Dorsolateral prefrontal cortex (tissue), 120 donors: ENCODE measurements at regions of chr4 and their contacts with region 1.

Region 1: DNA sequence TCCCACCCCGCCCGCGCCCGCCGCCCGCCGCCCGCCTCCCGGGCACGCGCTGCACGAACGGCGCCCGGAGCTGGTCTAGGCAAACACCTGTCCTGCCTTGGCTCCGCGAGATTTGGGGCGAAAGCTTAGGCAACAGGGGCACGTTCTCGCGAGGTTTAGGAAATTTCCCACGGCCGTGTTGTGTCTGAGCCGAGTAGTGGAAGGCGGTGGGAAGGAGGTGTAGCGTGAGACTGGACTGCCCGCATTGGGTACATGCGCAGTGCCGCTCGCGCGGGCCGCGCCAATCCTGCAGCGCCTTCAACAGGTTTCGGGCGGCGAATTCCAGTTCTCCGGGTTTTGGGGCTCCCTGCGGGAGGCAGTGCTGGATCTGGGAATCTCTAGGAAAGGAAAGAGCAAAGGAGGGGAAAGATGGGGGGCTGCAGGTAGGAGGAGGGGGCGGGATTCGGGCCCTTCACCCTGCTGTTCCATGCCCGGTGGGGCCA is 1.3 kb upstream of the RBPJ start:
- DNase-seq: peak; percentile 90 to 99 (median 96)
- H3K4me3 ChIP-seq: peak overlapping the region; percentile 64 to 92 (median 82)
- H3K27ac ChIP-seq: peak overlapping the region; percentile 81 to 99 (median 96)
- H3K27me3 ChIP-seq: no peaks in the 10 kb centered on the region
- CTCF ChIP-seq: peak in 42 of 56 donors; percentile 10 to 61 (median 40)

Region 2: DNA sequence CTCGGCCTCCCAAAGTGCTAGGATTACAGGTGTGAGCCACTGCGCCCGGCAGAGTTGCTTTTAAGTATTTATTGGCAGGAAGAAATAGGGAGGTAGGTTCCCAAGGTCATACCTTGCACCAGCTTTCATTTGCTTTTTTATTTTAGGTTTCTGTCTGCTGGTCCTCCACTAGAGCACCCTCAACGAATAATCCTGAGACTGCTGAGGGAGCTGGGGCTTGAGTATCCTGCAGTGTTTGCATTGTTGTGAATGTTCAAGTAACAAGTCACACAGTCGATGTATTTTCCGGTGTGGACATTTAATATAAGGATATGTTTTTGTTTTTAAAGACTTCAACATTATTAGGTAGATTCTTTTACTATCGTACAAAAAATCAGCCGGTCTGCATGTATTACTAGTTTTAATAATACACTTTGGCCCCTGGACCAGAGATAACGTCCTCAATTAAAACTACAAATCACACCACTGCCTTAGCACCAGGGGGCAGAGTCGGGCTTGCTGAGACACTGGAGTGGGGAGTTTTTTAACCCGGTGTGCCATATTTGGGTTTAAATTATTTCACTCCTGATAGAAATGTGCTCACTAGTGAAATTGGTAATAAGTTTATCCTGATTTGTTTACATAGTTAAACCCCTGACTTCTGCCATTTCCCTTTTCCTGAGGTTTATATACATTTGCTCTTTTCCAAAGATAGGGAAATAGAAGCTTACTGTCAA is 393.9 kb before region 1 on chr4:
- intact Hi-C with region 1: loop called (anchors 5 to 10 kb)
- DNase-seq: peak in 8 of 10 donors; percentile 40 to 70 (median 56)
- H3K4me3 ChIP-seq: peak overlapping the region in 7 of 59 donors; percentile 1 to 26 (median 16)
- H3K27ac ChIP-seq: peak overlapping the region in 28 of 59 donors; percentile 12 to 86 (median 46)
- H3K27me3 ChIP-seq: no peaks in the 10 kb centered on the region
- CTCF ChIP-seq: peak; percentile 15 to 78 (median 67)

Region 3: GRCh38 chr4:25993395-25994185 is 325.9 kb before region 1 on chr4:
- intact Hi-C with region 1: loop called in 1 of 2 experiments (anchors 2 kb)
- DNase-seq: no peak
- H3K4me3 ChIP-seq: no peak overlapping the region
- H3K27ac ChIP-seq: no peak overlapping the region
- H3K27me3 ChIP-seq: no peaks in the 10 kb centered on the region
- CTCF ChIP-seq: peak in 5 of 56 donors; percentile 7 to 30 (median 25)

Region 4: DNA sequence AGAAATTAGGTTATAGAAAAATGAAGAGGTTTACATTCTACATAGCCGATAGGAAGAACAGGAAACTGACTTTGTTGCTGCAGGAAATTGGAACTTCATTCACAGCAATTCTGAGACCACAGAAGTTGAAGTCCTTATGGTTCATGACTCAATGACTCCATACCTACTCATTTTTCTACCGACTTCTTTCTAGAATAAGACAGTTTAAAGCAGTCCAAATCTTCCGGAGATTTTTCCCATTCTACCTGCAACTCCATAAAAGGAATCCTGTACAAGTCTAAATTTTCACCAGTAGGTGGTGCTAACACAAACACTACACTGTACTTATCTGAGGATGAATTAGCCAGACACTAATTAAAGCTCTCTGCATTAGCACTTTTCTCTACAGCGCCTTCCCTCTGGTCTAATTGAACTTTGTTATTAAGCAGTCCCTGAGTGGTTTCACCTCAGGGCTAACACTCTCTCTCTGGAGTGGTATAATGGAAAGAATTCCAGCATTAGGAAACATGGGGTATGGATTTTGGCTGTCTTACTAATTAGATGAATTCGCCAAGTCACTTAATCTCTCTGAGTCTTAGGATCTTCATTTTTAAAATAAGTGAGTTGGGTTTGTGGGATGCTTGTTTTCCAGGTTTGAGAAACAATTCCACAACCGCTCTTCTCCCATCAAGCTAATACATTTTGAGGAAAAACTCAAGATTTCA is 237.6 kb before region 1 on chr4:
- intact Hi-C with region 1: loop called (anchors 2 to 5 kb)
- DNase-seq: no peak
- H3K4me3 ChIP-seq: no peak overlapping the region
- H3K27ac ChIP-seq: no peak overlapping the region
- H3K27me3 ChIP-seq: peaks cover 0 to 11% (median 0%) of the 10 kb centered on the region in 45 donors
- CTCF ChIP-seq: peak; percentile 49 to 89 (median 76)

Region 5: GRCh38 chr4:26235500-26235899 is 84.0 kb before region 1 on chr4:
- intact Hi-C with region 1: loop called (anchors 5 to 10 kb)
- DNase-seq: peak in 3 of 10 donors; percentile 39 to 49 (median 43)
- H3K4me3 ChIP-seq: no peak overlapping the region
- H3K27ac ChIP-seq: peak overlapping the region in 50 of 59 donors; percentile 2 to 99 (median 82)
- H3K27me3 ChIP-seq: peaks cover 0 to 3% (median 0%) of the 10 kb centered on the region in 45 donors
- CTCF ChIP-seq: peak in 27 of 56 donors; percentile 8 to 63 (median 31)

Region 6: DNA sequence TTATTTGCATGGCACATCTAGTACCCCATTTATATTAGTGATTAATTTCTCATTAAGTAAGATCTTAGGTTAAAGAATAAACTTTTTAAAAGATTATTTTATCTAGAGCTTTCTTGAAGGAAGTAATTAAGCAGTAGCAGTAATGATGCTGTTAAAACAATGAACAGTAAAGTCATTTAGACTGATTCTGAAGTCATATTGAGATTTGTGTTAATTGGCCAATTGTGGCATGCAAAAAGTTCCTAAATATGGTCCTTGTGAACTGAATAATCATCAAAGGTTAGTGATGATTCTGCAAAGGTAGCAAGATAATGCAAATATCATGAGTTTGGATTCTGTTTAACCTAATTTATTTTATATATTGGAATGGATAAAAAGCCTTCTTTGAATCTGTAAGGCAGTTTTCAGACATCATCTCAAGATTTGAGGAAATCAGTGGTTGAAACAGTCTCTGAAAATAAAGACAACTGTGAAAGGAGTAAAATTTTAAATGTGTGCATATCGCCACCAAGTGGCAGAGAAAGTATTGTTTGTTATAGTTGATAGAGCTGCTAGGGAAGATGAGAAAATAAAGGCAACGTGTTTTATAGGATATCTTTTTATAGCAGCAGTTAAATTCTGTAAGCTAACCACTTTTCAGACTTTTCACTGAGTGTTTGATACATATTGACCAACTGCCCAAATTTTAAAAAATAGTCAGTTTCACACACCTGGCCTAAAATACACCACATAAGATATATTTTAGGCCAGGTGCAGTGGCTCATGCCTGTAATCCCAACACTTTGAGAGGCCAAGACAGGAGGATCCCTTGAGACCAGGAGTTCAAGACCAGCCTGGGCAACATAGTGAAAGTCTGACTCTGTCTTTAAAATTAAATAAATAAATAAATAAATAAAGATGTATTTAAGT is 91.1 kb after region 1 on chr4:
- intact Hi-C with region 1: loop called in 1 of 2 experiments (anchors 5 kb)
- DNase-seq: peak in 1 of 10 donors; percentile 18
- H3K4me3 ChIP-seq: no peak overlapping the region
- H3K27ac ChIP-seq: peak overlapping the region in 51 of 59 donors; percentile 2 to 82 (median 47)
- H3K27me3 ChIP-seq: no peaks in the 10 kb centered on the region
- CTCF ChIP-seq: peak; percentile 62 to 98 (median 82)

Region 7: DNA sequence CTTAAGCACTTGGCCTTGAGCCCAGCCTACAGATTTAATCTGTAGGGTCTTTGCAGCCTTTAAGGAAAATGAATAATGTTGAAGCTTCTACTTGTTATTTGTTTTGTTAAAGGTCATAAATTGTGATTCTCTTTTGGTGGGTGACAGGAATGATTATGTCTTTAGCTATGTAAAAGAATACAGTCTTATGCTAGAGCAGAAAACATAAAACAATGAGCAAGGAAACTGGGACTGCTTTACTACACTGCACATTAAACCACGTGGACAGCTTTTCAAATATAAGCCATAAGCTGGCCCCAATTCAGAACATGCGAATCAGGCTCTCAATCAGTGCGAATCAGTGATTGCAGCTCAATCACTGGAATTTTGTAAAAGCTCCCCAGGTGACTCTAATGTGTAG is 223.5 kb after region 1 on chr4:
- intact Hi-C with region 1: no loop called
- DNase-seq: no peak
- H3K4me3 ChIP-seq: no peak overlapping the region
- H3K27ac ChIP-seq: no peak overlapping the region
- H3K27me3 ChIP-seq: no peaks in the 10 kb centered on the region
- CTCF ChIP-seq: no peak